K562 (cell line): ENCODE measurements at regions of chr1 and their contacts with region 1.

Region 1: DNA sequence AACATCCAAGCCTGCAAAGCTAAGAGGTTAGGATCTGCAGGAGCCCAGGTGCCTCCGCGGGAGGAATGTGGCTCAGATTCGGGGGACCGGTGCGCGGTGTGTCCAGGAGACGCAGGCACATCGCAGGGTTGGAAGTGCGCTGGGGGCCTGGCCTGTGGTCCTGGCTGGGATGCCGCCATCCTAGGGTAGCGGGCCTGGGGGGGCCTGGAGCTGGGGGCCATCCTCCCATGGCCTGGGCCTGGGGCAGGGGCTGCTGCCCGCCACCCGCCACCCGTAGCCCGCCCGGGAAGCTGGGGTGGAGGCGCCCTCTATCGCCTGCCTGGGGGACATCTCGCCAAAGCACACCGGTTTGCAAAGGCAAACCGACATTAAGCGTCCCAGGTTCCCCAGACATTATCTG is 170.6 kb upstream of the ARHGEF16 start:
- DNase-seq: peak; percentile 30 to 71 (median 69)
- ATAC-seq: peak; percentile 87
- H3K4me3 ChIP-seq: no peak overlapping the region
- H3K27ac ChIP-seq: no peak overlapping the region
- H3K4me1 ChIP-seq: peaks cover 0 to 7% of the 10 kb centered on the region in 2 experiments; a peak in 1 of 5 replicates
- H3K27me3 ChIP-seq: peaks cover 11 to 82% of the 10 kb centered on the region in 2 experiments; a peak in 3 of 5 replicates
- CTCF ChIP-seq: peak; percentile 68 to 77 (median 68)
- EP300 ChIP-seq: no peak
- POLR2A ChIP-seq: no peak
- RAD21 ChIP-seq: peak; percentile 22 to 69; a peak in 2 of 4 replicates

Region 2: DNA sequence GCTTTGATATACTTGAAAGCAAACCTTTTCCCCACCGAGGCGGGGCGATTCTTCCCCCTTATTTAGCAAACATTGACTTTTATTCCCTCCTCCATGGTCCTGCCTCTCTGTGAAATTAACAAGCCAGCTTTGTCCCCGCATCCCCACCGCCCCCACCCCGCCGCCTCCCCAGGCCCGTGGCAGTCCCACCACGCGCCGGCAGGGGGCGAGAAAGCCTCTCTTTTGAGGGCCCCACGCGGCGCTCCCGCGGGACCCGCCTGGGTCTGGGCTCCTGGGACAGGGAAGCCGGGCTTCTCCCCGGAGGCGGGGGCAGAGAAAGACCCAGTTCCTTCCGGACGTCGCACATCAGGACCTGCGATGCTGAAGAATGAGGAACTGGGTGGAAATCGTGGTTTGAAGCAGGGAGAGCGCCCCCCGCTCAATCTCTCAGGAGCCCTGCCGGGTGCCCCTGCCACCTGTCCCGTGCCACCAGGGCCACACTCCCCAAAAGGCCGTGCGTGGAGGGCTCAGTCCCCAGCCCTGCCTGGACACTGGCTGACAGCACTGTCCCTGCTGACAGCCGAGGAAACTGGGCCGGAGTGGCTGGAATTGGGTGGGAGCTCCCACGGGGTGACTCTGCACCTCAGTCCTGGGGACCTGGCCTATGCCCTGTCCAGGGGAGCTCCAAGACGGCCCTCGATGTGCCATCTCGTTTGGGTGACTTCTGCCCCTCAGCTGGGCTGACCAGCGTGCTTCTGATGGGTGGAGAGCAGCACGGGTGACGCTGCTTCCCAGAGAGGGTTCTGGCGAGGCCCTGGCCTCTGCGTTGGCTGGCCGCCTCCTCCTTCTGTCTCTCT is 271.2 kb before region 1 on chr1:
- CTCF ChIA-PET with region 1: no interaction called
- POLR2A ChIA-PET with region 1: no interaction called
- in situ Hi-C with region 1: no loop called
- intact Hi-C with region 1: loop called (anchors 5 kb)
- DNase-seq: peak; percentile 52 to 91 (median 88)
- ATAC-seq: peak; percentile 94
- H3K4me3 ChIP-seq: no peak overlapping the region
- H3K27ac ChIP-seq: no peak overlapping the region
- H3K4me1 ChIP-seq: 0 out of 5 replicates have a peak, but pooled peaks cover 0 to 5% of the 10 kb centered on the region in 2 experiments
- H3K27me3 ChIP-seq: peaks cover 0 to 34% of the 10 kb centered on the region in 2 experiments; a peak in 2 of 5 replicates
- CTCF ChIP-seq: peak; percentile 50 to 74 (median 61); a peak in 5 of 6 replicates
- EP300 ChIP-seq: no peak
- POLR2A ChIP-seq: no peak
- RAD21 ChIP-seq: peak; percentile 50 to 62

Region 3: DNA sequence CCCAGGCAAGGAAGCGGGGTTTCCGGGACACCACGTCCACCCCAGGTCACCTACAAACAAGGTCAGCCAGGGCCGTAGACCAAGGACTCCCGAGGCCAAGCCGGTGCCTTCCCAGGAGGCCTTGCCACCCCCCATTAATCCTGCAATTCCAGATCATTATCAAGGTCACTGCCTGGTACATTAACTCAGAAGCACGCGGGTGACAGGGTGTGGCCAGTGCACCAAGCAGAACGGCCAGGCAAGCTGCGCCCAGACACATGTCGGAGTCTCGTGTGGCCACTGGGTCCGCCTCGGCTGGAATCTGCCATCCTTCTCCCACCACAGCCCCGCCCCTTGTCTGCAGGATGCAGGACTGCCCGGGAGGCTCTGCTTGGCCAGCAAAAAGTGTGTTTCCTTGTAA is 70.1 kb before region 1 on chr1:
- CTCF ChIA-PET with region 1: no interaction called
- POLR2A ChIA-PET with region 1: no interaction called
- in situ Hi-C with region 1: no loop called
- intact Hi-C with region 1: no loop called
- DNase-seq: no peak
- ATAC-seq: no peak
- H3K4me3 ChIP-seq: no peak overlapping the region
- H3K27ac ChIP-seq: no peak overlapping the region
- H3K4me1 ChIP-seq: no peaks in the 10 kb centered on the region; a peak in 1 of 5 replicates
- H3K27me3 ChIP-seq: peaks cover 42 to 91% of the 10 kb centered on the region in 2 experiments
- CTCF ChIP-seq: no peak
- EP300 ChIP-seq: no peak
- POLR2A ChIP-seq: no peak
- RAD21 ChIP-seq: no peak

Region 4: DNA sequence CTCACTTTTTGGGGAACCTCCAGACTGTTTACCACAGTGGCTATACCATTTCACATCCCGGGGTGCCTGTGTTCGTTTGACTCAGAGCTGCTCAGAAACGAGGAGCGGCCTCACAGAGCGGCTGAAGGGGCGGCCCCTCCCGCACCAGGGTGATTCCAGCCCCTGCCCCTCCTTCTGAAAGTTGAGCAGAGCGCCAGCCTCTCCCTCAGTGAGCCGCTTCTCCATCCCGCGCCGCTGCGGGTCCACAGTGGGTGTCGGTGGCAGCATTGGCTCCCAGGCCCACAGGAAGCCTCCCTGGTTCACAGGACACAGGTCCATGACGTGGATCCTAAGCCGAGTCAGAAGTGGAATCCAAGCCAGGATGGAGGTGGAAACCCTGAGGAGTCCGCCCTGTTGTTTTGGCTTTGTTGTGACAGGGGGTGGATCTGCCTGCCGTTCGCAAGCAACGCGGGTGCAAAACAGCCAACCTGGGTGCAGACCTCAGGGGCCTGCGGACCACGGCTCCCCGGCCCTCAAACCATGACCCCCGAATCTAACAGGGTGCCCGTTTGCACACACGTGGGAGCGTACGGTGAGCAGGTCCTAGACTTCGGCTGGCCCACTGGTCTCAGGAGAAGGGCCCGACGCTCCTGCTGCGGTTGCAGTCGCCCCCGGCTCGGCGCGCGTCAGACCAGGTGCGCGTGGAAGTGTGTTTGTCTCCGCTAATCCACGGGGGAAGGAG is 16.1 kb before region 1 on chr1:
- CTCF ChIA-PET with region 1: no interaction called
- POLR2A ChIA-PET with region 1: no interaction called
- in situ Hi-C with region 1: no loop called
- intact Hi-C with region 1: no loop called
- DNase-seq: no peak
- ATAC-seq: no peak
- H3K4me3 ChIP-seq: no peak overlapping the region
- H3K27ac ChIP-seq: no peak overlapping the region
- H3K4me1 ChIP-seq: peaks cover 0 to 13% of the 10 kb centered on the region in 2 experiments; a peak in 1 of 5 replicates
- H3K27me3 ChIP-seq: peaks cover 18 to 62% of the 10 kb centered on the region in 2 experiments; a peak in 3 of 5 replicates
- CTCF ChIP-seq: no peak
- EP300 ChIP-seq: no peak
- POLR2A ChIP-seq: no peak
- RAD21 ChIP-seq: no peak